Activated T-helper 2 cell treated with anti-CD3 and anti-CD28 coated beads, Interferon-gamma antibody, Interleukin-2, Interleukin-4, amounts not matched to agents 10 μg/mL and 5 μg/mL and 100 μg/mL, durations not matched to agents 14 hours and 24 hours and 36 hours (primary cell): ENCODE measurements at regions of chr1 and their contacts with region 1.

Region 1: GRCh38 chr1:35505908-35506798 is 51.0 kb downstream of the KIAA0319L start:
- DNase-seq: peak; percentile 69
- H3K4me3 Mint-ChIP-seq: peak overlapping the region; percentile 66
- H3K27ac Mint-ChIP-seq: peak overlapping the region; percentile 86
- H3K4me1 Mint-ChIP-seq: peaks cover 71% of the 10 kb centered on the region
- H3K27me3 Mint-ChIP-seq: no peaks in the 10 kb centered on the region

Region 2: GRCh38 chr1:35431173-35431599 is 75.0 kb before region 1 on chr1:
- intact Hi-C with region 1: loop called (anchors 1 kb)
- DNase-seq: no peak
- H3K4me3 Mint-ChIP-seq: no peak overlapping the region
- H3K27ac Mint-ChIP-seq: peak overlapping the region; percentile 91
- H3K4me1 Mint-ChIP-seq: peaks cover 23% of the 10 kb centered on the region
- H3K27me3 Mint-ChIP-seq: no peaks in the 10 kb centered on the region

Region 3: DNA sequence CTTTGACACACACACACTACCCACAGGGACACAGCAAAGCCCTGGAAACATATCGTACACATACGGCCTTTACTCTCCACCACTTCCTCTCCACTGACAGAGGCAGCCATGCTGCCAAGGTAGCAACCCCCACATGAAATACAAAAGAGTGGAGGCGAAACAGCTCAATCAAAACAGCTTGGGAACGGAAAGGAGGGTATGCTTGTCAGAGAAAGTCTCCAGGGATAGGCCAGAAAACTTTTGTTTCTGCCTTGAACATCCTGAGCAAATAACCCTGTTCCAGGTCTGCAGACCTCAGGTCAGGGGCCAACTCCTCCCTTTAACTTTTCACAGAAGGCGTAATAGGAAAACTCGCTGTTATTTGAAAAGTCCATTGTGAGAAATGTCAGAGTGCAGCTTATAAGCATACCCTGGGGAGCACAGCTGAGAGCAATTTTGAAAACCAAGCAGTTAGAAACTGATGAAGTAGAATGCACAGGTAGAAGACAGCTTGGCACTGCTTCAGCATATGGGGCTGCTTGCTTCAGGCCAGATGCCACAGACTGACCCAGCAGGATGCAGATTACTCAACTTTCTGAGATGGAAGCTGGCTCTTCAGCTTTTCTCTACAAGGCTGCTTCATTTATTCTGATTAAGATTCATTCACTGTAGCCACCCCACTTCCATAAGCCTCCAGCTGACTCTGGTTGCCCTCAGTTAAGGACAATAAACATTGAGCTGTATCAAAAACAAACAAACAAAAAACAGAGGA is 33.1 kb after region 1 on chr1:
- intact Hi-C with region 1: loop called (anchors 1 kb)
- DNase-seq: peak; percentile 38
- H3K4me3 Mint-ChIP-seq: peak overlapping the region; percentile 62
- H3K27ac Mint-ChIP-seq: peak overlapping the region; percentile 85
- H3K4me1 Mint-ChIP-seq: peaks cover 44% of the 10 kb centered on the region
- H3K27me3 Mint-ChIP-seq: no peaks in the 10 kb centered on the region

Region 4: DNA sequence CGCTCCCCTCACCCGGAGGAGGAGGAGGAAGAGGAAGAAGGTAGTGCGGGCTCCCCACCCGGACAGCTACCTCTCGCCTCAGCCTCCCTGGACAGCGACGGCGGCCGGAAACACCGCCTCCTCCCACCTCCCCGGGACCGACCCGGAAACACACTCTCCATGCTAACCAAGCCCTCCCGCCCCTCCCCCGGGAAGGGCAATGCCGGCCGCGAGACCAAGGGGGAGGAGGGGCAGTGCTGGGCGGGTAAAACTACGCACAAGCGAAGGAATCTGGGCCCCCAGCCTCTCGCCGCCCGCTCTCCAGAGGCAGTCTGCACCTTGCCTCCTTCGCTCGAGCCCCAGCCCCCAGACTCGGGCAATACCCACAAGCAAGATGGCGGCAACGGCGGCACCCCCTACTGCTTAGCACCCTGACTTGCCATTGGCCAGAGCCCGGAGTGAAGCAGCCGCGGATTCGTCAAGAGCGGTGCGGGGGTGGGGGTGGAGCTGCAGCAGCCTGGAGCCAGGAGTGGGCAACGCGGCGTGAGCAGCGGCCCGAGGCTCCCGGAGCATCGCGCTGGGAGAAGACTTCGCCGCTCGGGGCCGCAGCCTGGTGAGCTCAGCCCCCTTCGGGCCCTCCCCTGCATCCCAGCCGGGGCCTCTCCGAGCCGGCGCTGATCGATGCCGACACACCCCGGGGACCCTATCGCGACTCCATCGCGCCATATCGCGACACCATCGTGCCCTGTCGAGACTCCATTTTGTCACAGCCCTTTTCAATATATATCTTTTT is 51.3 kb after region 1 on chr1 and contains the starts of genes KIAA0319L and NCDN:
- intact Hi-C with region 1: loop called (anchors 1 kb)
- DNase-seq: peak; percentile 95
- H3K4me3 Mint-ChIP-seq: peak within 1 kb of the TSS; percentile 96
- H3K27ac Mint-ChIP-seq: peak within 1 kb of the TSS; percentile 96
- H3K4me1 Mint-ChIP-seq: peaks cover 40% of the 10 kb centered on the region
- H3K27me3 Mint-ChIP-seq: no peaks in the 10 kb centered on the region
- total RNA-seq, gene KIAA0319L: 40.9 and 46.5 TPM in 2 replicates
- total RNA-seq, gene NCDN: 31.8 and 32.6 TPM in 2 replicates

Region 5: GRCh38 chr1:35702508-35702907 is 196.4 kb after region 1 on chr1:
- intact Hi-C with region 1: no loop called
- DNase-seq: no peak
- H3K4me3 Mint-ChIP-seq: no peak overlapping the region
- H3K27ac Mint-ChIP-seq: no peak overlapping the region
- H3K4me1 Mint-ChIP-seq: peaks cover 7% of the 10 kb centered on the region
- H3K27me3 Mint-ChIP-seq: peaks cover 67% of the 10 kb centered on the region